Endothelial cell of umbilical vein (primary cell): ENCODE measurements at regions of chr1 and their contacts with region 1.

Region 1: DNA sequence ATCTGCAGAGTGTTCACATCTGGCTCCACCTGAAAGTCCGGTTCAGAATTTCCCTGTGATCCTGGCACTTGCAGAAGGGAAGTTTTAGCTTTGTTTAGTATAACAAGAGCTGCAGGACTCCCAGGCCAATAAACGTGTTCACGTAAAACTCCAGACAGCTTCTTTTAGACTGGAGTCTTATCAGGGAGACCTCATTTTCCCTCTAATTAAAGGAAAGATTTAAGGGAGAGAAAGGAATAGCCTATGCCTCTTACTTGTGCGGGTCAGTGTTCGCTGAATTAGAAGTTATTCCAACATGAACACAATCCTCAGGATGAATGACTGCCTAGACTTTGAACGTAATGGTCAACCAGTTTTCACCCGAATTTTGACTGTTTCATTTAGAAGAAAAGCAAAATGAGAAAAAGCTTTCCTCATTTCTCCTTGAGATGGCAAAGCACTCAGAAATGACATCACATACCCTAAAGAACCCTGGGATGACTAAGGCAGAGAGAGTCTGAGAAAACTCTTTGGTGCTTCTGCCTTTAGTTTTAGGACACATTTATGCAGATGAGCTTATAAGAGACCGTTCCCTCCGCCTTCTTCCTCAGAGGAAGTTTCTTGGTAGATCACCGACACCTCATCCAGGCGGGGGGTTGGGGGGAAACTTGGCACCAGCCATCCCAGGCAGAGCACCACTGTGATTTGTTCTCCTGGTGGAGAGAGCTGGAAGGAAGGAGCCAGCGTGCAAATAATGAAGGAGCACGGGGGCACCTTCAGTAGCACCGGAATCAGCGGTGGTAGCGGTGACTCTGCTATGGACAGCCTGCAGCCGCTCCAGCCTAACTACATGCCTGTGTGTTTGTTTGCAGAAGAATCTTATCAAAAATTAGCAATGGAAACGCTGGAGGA is 202.1 kb upstream of the SGIP1 start:
- DNase-seq: peak; percentile 97
- H3K4me3 ChIP-seq: peak overlapping the region; percentile 77 to 98 (median 92)
- H3K27ac ChIP-seq: peak overlapping the region; percentile 95
- H3K4me1 ChIP-seq: peaks cover 30% of the 10 kb centered on the region
- H3K27me3 ChIP-seq: no peaks in the 10 kb centered on the region
- CTCF ChIP-seq: peak; percentile 21 to 57
- POLR2A ChIP-seq: peak; percentile 97

Region 2: GRCh38 chr1:65792669-65793358 is 539.1 kb before region 1 on chr1 and contains the start of gene PDE4B:
- CTCF ChIA-PET with region 1: no interaction called
- POLR2A ChIA-PET with region 1: no interaction called
- dilution Hi-C with region 1: no loop called
- intact Hi-C with region 1: no loop called
- DNase-seq: peak; percentile 22
- H3K4me3 ChIP-seq: peak within 1 kb of the TSS; percentile 22 to 57 (median 24)
- H3K27ac ChIP-seq: no peak within 1 kb of the TSS
- H3K4me1 ChIP-seq: peaks cover 13% of the 10 kb centered on the region
- H3K27me3 ChIP-seq: peaks cover 20 to 39% of the 10 kb centered on the region in 2 experiments
- CTCF ChIP-seq: no peak
- POLR2A ChIP-seq: no peak
- total RNA-seq, gene PDE4B: 69.8 and 72.1 TPM in 2 replicates

Region 3: DNA sequence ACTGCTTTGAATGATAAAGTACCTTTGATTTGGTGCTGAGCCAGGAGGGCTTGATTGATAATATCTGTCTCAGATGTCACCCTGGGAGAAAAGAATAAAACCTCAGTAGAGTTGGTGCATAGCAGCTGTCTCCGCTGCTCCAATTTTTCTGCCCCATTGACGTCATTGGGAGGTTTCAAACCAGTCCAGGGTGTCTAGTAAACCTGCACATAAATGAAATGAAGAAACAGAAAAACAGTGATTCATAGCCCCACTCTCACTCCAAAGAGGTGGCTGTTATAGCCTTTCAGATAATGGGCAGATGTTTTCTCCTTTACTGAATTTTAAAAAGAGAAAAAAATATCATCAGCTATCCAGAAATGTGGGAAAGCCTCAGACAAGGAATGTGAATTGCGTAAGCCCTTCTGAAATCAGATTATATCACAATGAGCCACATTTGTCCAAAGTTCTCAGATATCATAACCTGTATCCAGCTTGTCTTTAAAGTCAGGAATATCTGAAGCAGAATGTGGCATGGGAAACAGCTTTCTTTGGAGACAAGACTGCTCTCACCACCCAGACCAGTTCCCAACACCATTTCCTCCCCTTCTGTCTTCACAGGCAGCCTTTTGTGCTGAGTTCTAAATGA is 149.2 kb before region 1 on chr1:
- CTCF ChIA-PET with region 1: no interaction called
- POLR2A ChIA-PET with region 1: no interaction called
- dilution Hi-C with region 1: no loop called
- intact Hi-C with region 1: no loop called
- DNase-seq: no peak
- H3K4me3 ChIP-seq: no peak overlapping the region
- H3K27ac ChIP-seq: no peak overlapping the region
- H3K4me1 ChIP-seq: no peaks in the 10 kb centered on the region
- H3K27me3 ChIP-seq: peaks cover 0 to 2% of the 10 kb centered on the region in 2 experiments
- CTCF ChIP-seq: no peak
- POLR2A ChIP-seq: no peak

Region 4: DNA sequence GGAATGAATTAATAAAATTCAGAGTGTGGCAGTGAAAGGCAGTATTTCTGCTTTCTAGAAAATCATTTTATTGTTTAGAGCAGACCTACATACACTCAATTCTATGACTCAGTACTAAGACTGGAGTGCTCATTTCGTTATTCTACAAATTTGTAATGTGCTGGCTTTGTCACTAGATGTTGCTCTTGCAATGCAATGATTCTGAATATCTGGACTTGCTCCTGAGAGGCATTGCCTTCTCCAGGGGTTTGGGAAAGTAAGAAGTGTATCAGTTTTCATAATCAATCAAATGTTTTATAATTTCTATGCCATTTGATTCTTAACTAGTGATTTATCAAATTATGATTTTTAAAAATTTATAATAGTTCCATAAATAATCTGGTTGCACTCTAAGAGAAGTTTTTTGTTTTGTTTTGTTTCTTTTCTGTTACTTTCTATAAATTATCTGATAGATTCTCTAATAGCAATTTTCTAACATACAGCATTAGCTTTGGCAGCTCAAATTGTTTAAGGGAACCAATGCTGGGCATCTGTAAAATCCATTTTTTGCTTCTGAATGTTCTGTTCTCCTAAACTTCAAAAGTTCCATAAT is 78.5 kb before region 1 on chr1:
- CTCF ChIA-PET with region 1: interaction called, 8 read pairs
- POLR2A ChIA-PET with region 1: interaction called, 3 read pairs
- dilution Hi-C with region 1: no loop called
- intact Hi-C with region 1: loop called (anchors 1 kb)
- DNase-seq: peak; percentile 89
- H3K4me3 ChIP-seq: no peak overlapping the region
- H3K27ac ChIP-seq: no peak overlapping the region
- H3K4me1 ChIP-seq: peaks cover 6% of the 10 kb centered on the region
- H3K27me3 ChIP-seq: no peaks in the 10 kb centered on the region
- CTCF ChIP-seq: peak; percentile 60
- POLR2A ChIP-seq: no peak

Region 5: GRCh38 chr1:66271216-66271903 is 60.5 kb before region 1 on chr1:
- CTCF ChIA-PET with region 1: interaction called, 51 read pairs
- POLR2A ChIA-PET with region 1: interaction called, 13 read pairs
- dilution Hi-C with region 1: no loop called
- intact Hi-C with region 1: loop called (anchors 1 kb)
- DNase-seq: peak; percentile 98
- H3K4me3 ChIP-seq: no peak overlapping the region
- H3K27ac ChIP-seq: peak overlapping the region; percentile 71
- H3K4me1 ChIP-seq: peaks cover 49% of the 10 kb centered on the region
- H3K27me3 ChIP-seq: no peaks in the 10 kb centered on the region
- CTCF ChIP-seq: no peak
- POLR2A ChIP-seq: peak; percentile 73

Region 6: GRCh38 chr1:66342707-66343106 is 10.8 kb after region 1 on chr1:
- CTCF ChIA-PET with region 1: interaction called, 15 read pairs
- POLR2A ChIA-PET with region 1: interaction called, 6 read pairs
- dilution Hi-C with region 1: no loop called
- intact Hi-C with region 1: no loop called
- DNase-seq: no peak
- H3K4me3 ChIP-seq: no peak overlapping the region
- H3K27ac ChIP-seq: peak overlapping the region; percentile 68
- H3K4me1 ChIP-seq: peaks cover 91% of the 10 kb centered on the region
- H3K27me3 ChIP-seq: no peaks in the 10 kb centered on the region
- CTCF ChIP-seq: no peak
- POLR2A ChIP-seq: no peak

Region 7: GRCh38 chr1:66371233-66372005 is 39.5 kb after region 1 on chr1:
- CTCF ChIA-PET with region 1: interaction called, 9 read pairs
- POLR2A ChIA-PET with region 1: interaction called, 6 read pairs
- dilution Hi-C with region 1: no loop called
- intact Hi-C with region 1: loop called (anchors 1 kb)
- DNase-seq: peak; percentile 98
- H3K4me3 ChIP-seq: peak overlapping the region in 1 of 3 experiments; percentile 29
- H3K27ac ChIP-seq: peak overlapping the region; percentile 99
- H3K4me1 ChIP-seq: peaks cover 60% of the 10 kb centered on the region
- H3K27me3 ChIP-seq: no peaks in the 10 kb centered on the region
- CTCF ChIP-seq: no peak
- POLR2A ChIP-seq: no peak

Region 8: GRCh38 chr1:66533804-66534740 is 202.2 kb after region 1 on chr1 and contains the start of gene SGIP1:
- CTCF ChIA-PET with region 1: no interaction called
- POLR2A ChIA-PET with region 1: no interaction called
- dilution Hi-C with region 1: loop called (anchors 25 kb)
- intact Hi-C with region 1: loop called (anchors 5 kb)
- DNase-seq: peak; percentile 88
- H3K4me3 ChIP-seq: peak within 1 kb of the TSS; percentile 41 to 66 (median 47)
- H3K27ac ChIP-seq: peak within 1 kb of the TSS; percentile 75
- H3K4me1 ChIP-seq: peaks cover 29% of the 10 kb centered on the region
- H3K27me3 ChIP-seq: no peaks in the 10 kb centered on the region
- CTCF ChIP-seq: no peak
- POLR2A ChIP-seq: no peak
- total RNA-seq, gene SGIP1: 51.0 and 68.9 TPM in 2 replicates

Region 9: GRCh38 chr1:66563094-66563800 is 231.3 kb after region 1 on chr1:
- CTCF ChIA-PET with region 1: no interaction called
- POLR2A ChIA-PET with region 1: no interaction called
- dilution Hi-C with region 1: no loop called
- intact Hi-C with region 1: loop called (anchors 1 kb)
- DNase-seq: peak; percentile 97
- H3K4me3 ChIP-seq: peak overlapping the region in 1 of 3 experiments; percentile 23
- H3K27ac ChIP-seq: peak overlapping the region; percentile 98
- H3K4me1 ChIP-seq: peaks cover 29% of the 10 kb centered on the region
- H3K27me3 ChIP-seq: no peaks in the 10 kb centered on the region
- CTCF ChIP-seq: no peak
- POLR2A ChIP-seq: peak; percentile 53